ENCODE measurements at regions of chr14 and their contacts with region 1.

Region 1: GRCh38 chr14:35826218-35826951 is at the start of gene BRMS1L:
- DNase-seq: peak; percentile 90
- ATAC-seq: peak; percentile 96
- H3K4me3 Mint-ChIP-seq: peak within 1 kb of the TSS; percentile 87
- H3K27ac Mint-ChIP-seq: peak within 1 kb of the TSS; percentile 92
- H3K4me1 Mint-ChIP-seq: peaks cover 19% of the 10 kb centered on the region
- H3K27me3 Mint-ChIP-seq: no peaks in the 10 kb centered on the region
- CTCF ChIP-seq: no peak
- total RNA-seq, gene BRMS1L: 3.7 and 4.4 TPM in 2 replicates

Region 2: DNA sequence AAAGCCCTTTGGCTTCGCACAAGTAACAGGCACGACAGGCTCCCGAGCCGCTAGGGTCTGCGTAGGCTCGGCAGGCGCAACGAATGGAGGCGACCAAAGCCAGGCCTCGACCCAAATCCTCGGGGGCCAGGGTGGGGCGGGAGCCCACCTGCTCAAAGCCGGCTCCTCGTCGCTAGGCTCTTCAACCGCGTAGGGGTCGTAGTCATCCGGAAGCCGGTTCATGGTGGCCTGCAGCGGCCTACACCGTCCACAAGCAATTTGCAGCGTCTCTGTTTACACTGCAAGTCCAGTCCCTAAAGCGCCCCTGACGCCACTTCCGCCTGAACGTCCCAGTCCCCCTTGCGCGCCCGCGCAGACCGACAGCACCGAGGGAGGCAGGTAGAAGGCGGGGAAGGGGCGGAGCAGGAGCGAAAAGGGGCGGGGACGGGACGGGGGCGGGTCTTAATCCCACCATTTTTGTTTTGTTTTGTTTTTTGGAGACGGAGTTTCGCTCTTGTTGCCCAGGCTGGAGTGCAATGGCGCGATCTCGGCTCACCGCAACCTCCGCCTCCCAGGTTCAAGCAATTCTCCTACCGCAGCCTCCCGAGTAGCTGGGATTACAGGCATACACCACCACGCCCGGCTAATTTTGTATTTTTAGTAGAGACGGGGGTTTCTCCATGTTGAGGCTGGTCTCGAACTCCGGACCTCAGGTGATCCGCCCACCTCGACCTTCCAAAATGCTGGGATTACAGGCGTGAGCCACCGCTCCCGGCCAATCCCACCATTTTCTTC is 1286.8 kb before region 1 on chr14 and contains the start of gene EAPP:
- CTCF ChIA-PET with region 1: no interaction called
- POLR2A ChIA-PET with region 1: interaction called, 3 read pairs
- intact Hi-C with region 1: loop called (anchors 10 kb)
- DNase-seq: peak; percentile 86
- ATAC-seq: peak; percentile 99
- H3K4me3 Mint-ChIP-seq: peak within 1 kb of the TSS; percentile 99
- H3K27ac Mint-ChIP-seq: peak within 1 kb of the TSS; percentile 97
- H3K4me1 Mint-ChIP-seq: peaks cover 34% of the 10 kb centered on the region
- H3K27me3 Mint-ChIP-seq: no peaks in the 10 kb centered on the region
- CTCF ChIP-seq: no peak
- total RNA-seq, gene EAPP: 40.7 and 43.2 TPM in 2 replicates

Region 3: GRCh38 chr14:35285168-35286002 is 541.0 kb before region 1 on chr14:
- CTCF ChIA-PET with region 1: no interaction called
- POLR2A ChIA-PET with region 1: no interaction called
- intact Hi-C with region 1: loop called (anchors 1 kb)
- DNase-seq: no peak
- ATAC-seq: peak; percentile 81
- H3K4me3 Mint-ChIP-seq: peak overlapping the region; percentile 80
- H3K27ac Mint-ChIP-seq: peak overlapping the region; percentile 90
- H3K4me1 Mint-ChIP-seq: peaks cover 52% of the 10 kb centered on the region
- H3K27me3 Mint-ChIP-seq: no peaks in the 10 kb centered on the region
- CTCF ChIP-seq: no peak

Region 4: DNA sequence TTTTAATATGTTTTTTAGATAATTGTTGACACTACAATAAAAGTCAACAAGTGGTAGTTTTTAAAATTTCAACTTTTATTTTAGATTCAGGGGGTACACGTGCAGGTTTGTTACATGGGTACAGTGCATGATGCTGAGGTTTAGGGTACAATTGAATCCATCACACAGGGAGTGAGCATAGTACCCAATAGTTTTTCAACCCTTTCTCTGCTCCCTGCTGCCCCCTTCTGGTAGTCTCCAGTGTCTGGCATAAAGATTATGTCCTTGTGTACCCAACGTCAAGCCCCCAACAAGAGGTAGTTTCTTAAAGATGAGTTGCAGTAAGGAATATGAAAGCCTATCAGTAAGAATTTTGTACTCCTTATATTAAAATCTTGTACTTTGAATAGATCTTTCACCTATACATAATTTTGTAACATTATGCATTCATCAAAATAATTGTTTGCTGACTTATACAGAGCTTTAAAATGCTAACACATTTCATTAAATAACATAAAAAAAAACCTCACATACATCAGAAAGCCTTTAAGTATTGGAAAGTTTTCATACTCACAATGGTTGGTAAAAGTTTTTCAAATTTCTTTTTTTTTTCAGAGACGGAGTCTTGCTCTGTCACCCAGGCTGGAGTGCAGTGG is 11.9 kb before region 1 on chr14:
- CTCF ChIA-PET with region 1: interaction called, 12 read pairs
- POLR2A ChIA-PET with region 1: interaction called, 28 read pairs
- intact Hi-C with region 1: loop called (anchors 1 kb)
- DNase-seq: peak; percentile 37
- ATAC-seq: peak; percentile 90
- H3K4me3 Mint-ChIP-seq: no peak overlapping the region
- H3K27ac Mint-ChIP-seq: no peak overlapping the region
- H3K4me1 Mint-ChIP-seq: peaks cover 4% of the 10 kb centered on the region
- H3K27me3 Mint-ChIP-seq: no peaks in the 10 kb centered on the region
- CTCF ChIP-seq: peak; percentile 56